ENCODE measurements at regions of chr1 and their contacts with region 1.

Region 1: DNA sequence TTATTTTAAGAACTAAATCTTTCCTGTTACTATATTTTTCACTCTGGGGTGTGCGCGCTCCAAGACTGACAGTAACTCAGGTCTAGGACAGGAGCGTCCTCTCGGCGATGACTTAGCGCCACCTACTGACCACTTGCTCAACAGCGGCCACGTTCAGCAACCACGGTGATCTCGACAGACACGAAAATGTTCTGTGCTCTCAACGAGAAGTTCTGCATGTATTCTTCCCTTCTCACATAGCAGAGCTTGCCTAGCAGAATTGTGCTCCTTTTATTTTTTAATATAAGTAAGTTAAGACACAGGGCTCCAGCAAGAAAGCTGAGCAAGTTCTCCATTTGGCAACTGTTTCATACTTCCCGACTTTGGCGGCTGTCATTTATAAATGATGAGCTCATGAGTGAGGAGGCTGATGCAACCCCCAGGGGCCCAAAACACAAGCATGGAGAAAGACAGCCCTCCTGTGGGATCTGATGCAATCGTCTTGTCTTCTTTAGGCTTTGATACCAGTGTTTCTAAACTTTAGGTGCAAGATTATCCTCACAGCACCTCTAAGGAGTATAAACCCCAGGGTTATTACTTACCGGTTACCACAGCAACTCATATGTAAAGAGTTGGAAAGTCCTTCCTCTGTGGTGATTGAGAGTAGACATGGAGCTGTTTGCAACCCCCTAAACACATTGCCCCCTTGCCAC is 92.6 kb downstream of the HHIPL2 start:
- DNase-seq: peak; percentile 58 to 88 (median 82)
- ATAC-seq: peak; percentile 97
- H3K4me3 ChIP-seq: no peak overlapping the region
- H3K4me3 Mint-ChIP-seq: peak overlapping the region in 9 of 10 donors; percentile 0 to 75 (median 58)
- H3K27ac ChIP-seq: no peak overlapping the region
- H3K27ac Mint-ChIP-seq: peak overlapping the region; percentile 26 to 84 (median 65)
- H3K4me1 ChIP-seq: peaks cover 8 to 9% of the 10 kb centered on the region in 2 donors
- H3K4me1 Mint-ChIP-seq: peaks cover 8 to 31% (median 15%) of the 10 kb centered on the region in 7 donors
- H3K27me3 ChIP-seq: no peaks in the 10 kb centered on the region
- H3K27me3 Mint-ChIP-seq: peaks cover 0 to 4% (median 0%) of the 10 kb centered on the region in 5 donors

Region 2: DNA sequence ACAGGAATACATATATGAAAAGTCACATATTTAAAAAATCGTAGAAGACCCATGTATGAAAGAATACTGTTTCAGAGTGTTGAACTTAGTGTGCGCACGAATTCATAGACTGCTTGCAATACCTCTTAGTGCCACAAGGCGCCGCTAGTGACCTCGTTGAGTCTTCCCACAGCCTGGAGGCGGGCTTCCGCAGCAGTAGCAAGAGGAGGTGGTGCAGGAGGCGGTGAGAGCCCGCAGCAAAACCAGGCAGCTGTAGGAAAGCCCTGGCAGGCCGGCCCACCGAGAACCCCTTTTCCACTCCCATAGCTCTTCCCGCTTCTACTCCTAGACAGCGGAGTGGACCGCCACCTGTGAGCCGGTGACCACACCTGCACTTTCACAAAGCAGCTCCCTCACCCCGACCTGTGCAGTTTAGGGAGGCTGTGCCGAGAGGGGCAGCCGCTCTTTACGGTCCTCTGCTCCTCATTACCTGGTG is 1645.1 kb before region 1 on chr1:
- CTCF ChIA-PET with region 1: no interaction called
- POLR2A ChIA-PET with region 1: no interaction called
- intact Hi-C with region 1: loop called in 1 of 2 experiments (anchors 1 kb)
- DNase-seq: peak; percentile 48 to 71 (median 59)
- ATAC-seq: peak; percentile 97
- H3K4me3 ChIP-seq: no peak overlapping the region
- H3K4me3 Mint-ChIP-seq: peak overlapping the region; percentile 33 to 86 (median 75)
- H3K27ac ChIP-seq: no peak overlapping the region
- H3K27ac Mint-ChIP-seq: peak overlapping the region in 1 of 9 donors; percentile 25
- H3K4me1 ChIP-seq: no peaks in the 10 kb centered on the region
- H3K4me1 Mint-ChIP-seq: peaks cover 0 to 9% (median 7%) of the 10 kb centered on the region in 7 donors
- H3K27me3 ChIP-seq: no peaks in the 10 kb centered on the region
- H3K27me3 Mint-ChIP-seq: peaks cover 5 to 33% (median 26%) of the 10 kb centered on the region in 5 donors

Region 3: DNA sequence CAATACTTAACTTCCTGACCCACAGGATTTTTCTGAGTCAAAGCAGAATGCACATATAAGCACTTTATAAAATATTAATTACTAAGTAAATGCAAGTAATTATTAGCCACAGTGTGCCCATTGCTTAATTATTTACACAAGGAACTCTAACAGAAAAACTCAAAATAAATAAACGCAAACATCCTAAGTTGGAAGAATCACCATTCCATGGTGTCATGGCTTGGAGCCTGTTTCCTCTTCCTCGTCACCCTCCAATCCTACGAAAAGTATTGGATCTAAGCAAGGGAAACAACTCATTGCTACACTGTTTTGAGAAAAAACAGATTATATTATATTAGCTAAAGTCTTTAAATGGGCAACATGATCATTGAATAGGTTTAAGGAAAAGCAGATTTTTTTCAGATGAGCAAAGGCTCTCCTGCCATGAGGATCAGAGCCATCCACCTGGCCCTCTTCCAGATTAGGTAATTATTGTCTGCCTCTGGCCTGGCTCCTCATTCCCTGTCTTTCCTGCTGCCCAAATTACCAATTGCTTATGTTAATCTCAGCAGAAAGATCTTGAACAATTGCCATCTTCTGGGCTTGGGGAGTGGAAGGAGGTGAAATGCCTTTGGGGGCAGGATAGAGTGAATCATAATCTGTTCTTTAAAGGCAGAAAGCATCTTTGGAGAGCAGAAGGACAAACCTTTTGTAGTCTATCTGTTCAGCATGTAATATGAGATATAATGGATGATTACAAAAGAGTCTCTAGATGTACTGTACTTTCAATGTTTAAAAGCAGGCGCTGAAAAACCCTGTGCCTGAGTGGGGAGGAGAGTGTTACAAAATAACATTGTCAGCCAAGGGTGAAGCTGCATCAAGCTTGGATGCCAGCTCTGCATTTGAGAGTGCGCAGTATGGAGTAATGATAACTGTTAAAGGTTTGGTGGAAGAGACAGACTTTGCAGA is 834.6 kb before region 1 on chr1:
- CTCF ChIA-PET with region 1: no interaction called
- POLR2A ChIA-PET with region 1: no interaction called
- intact Hi-C with region 1: loop called in 1 of 2 experiments (anchors 1 kb)
- DNase-seq: no peak
- ATAC-seq: no peak
- H3K4me3 ChIP-seq: no peak overlapping the region
- H3K4me3 Mint-ChIP-seq: no peak overlapping the region
- H3K27ac ChIP-seq: no peak overlapping the region
- H3K27ac Mint-ChIP-seq: no peak overlapping the region
- H3K4me1 ChIP-seq: no peaks in the 10 kb centered on the region
- H3K4me1 Mint-ChIP-seq: no peaks in the 10 kb centered on the region
- H3K27me3 ChIP-seq: no peaks in the 10 kb centered on the region
- H3K27me3 Mint-ChIP-seq: peaks cover 0 to 27% (median 0%) of the 10 kb centered on the region in 5 donors

Region 4: GRCh38 chr1:221979461-221980032 is 475.8 kb before region 1 on chr1:
- CTCF ChIA-PET with region 1: no interaction called
- POLR2A ChIA-PET with region 1: no interaction called
- intact Hi-C with region 1: loop called in 1 of 2 experiments (anchors 1 kb)
- DNase-seq: no peak
- ATAC-seq: no peak
- H3K4me3 ChIP-seq: no peak overlapping the region
- H3K4me3 Mint-ChIP-seq: no peak overlapping the region
- H3K27ac ChIP-seq: no peak overlapping the region
- H3K27ac Mint-ChIP-seq: no peak overlapping the region
- H3K4me1 ChIP-seq: no peaks in the 10 kb centered on the region
- H3K4me1 Mint-ChIP-seq: no peaks in the 10 kb centered on the region
- H3K27me3 ChIP-seq: no peaks in the 10 kb centered on the region
- H3K27me3 Mint-ChIP-seq: peaks cover 7 to 12% (median 9%) of the 10 kb centered on the region in 5 donors

Region 5: DNA sequence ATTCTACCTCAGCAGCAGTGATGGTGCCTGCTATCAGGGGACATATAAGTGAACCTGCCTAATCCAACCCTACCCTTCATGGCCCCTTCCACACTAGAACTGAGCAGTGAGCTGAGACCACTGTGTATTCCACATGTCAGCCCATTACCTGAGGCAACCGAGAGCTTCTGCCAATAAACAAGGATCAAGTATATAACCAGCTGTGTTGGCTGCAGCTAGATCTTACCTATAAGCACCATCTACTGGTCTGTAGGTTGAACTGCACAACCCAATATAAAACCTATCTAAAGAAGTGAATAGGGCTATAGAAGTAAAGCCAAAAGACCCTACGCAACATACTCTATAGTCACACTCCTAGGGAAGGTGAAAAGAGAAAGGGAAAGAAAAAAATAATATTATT is 284.3 kb before region 1 on chr1:
- CTCF ChIA-PET with region 1: no interaction called
- POLR2A ChIA-PET with region 1: no interaction called
- intact Hi-C with region 1: loop called in 1 of 2 experiments (anchors 5 kb)
- DNase-seq: no peak
- ATAC-seq: peak; percentile 46
- H3K4me3 ChIP-seq: no peak overlapping the region
- H3K4me3 Mint-ChIP-seq: no peak overlapping the region
- H3K27ac ChIP-seq: no peak overlapping the region
- H3K27ac Mint-ChIP-seq: no peak overlapping the region
- H3K4me1 ChIP-seq: no peaks in the 10 kb centered on the region
- H3K4me1 Mint-ChIP-seq: peaks cover 0 to 2% (median 0%) of the 10 kb centered on the region in 7 donors
- H3K27me3 ChIP-seq: no peaks in the 10 kb centered on the region
- H3K27me3 Mint-ChIP-seq: peaks cover 0 to 6% (median under 1%) of the 10 kb centered on the region in 5 donors

Region 6: DNA sequence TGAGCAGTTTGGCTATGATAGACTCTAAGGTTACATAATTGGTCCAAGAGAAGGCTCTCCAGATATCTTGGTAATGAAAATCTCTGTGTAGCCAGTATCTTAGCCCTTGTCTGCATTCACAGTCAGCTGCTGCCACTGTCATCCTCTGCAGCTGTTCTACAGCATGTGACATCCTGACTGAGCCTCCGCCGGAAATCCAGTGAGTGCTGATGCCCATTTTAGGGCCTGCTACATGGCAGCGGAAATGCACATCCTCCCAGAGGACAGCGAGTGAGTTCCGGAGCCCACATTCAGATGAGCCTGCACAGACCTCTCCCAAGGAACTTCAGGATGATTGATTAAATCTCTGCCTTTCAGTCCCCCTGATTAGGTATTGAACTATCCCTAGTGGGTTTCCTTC is 144.5 kb before region 1 on chr1:
- CTCF ChIA-PET with region 1: no interaction called
- POLR2A ChIA-PET with region 1: no interaction called
- intact Hi-C with region 1: no loop called
- DNase-seq: peak in 6 of 9 donors; percentile 4 to 23 (median 16)
- ATAC-seq: peak; percentile 27
- H3K4me3 ChIP-seq: no peak overlapping the region
- H3K4me3 Mint-ChIP-seq: no peak overlapping the region
- H3K27ac ChIP-seq: no peak overlapping the region
- H3K27ac Mint-ChIP-seq: no peak overlapping the region
- H3K4me1 ChIP-seq: no peaks in the 10 kb centered on the region
- H3K4me1 Mint-ChIP-seq: peaks cover 4 to 28% (median 15%) of the 10 kb centered on the region in 7 donors
- H3K27me3 ChIP-seq: no peaks in the 10 kb centered on the region
- H3K27me3 Mint-ChIP-seq: no peaks in the 10 kb centered on the region

Region 7: DNA sequence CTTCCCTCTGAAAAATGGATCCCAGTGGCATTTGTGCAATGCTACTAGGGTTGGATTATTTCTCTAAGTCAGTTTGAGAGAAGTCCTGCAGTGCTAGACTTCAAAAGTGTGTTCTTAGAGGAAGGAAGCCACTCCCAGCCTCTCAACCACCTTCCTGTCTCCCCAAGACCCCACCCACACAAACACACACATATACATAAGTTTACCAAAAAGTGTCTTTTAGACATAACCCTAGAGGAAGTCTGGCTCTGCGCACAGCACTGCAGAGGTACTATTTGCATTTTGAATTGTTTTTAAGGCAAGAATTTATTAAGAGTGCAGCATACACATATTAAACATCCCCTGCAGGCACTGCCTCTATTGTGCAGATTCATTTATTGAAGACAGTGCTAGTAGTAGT is 34.7 kb before region 1 on chr1:
- CTCF ChIA-PET with region 1: interaction called, 28 read pairs
- POLR2A ChIA-PET with region 1: interaction called, 20 read pairs
- intact Hi-C with region 1: loop called in 1 of 2 experiments (anchors 1 kb)
- DNase-seq: peak in 7 of 9 donors; percentile 62 to 84 (median 79)
- ATAC-seq: peak; percentile 93
- H3K4me3 ChIP-seq: peak overlapping the region; percentile 44
- H3K4me3 Mint-ChIP-seq: peak overlapping the region; percentile 50 to 83 (median 76)
- H3K27ac ChIP-seq: peak overlapping the region; percentile 50
- H3K27ac Mint-ChIP-seq: peak overlapping the region; percentile 85 to 99 (median 95)
- H3K4me1 ChIP-seq: peaks cover 36 to 62% of the 10 kb centered on the region in 2 donors
- H3K4me1 Mint-ChIP-seq: peaks cover 35 to 92% (median 80%) of the 10 kb centered on the region in 7 donors
- H3K27me3 ChIP-seq: no peaks in the 10 kb centered on the region
- H3K27me3 Mint-ChIP-seq: no peaks in the 10 kb centered on the region

Region 8: DNA sequence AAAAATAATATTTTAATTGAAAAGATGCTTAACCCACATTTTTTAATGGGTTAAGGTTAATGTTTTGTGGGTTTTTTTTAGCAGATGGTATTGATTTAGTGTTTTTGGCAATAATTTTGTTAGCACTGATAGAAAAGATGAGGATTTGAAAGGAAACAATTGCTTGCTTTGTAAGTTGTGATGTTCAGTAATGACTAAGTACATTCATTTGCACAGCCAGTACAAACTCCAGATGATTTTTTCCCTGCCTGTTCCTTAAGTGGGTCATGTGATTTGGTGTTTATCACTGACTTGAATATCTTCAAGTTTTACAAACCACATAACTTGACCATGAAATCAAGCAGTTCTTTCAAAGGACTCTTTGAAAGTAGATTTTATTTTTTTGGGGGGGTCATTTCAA is 374.5 kb after region 1 on chr1:
- CTCF ChIA-PET with region 1: no interaction called
- POLR2A ChIA-PET with region 1: no interaction called
- intact Hi-C with region 1: no loop called
- DNase-seq: no peak
- ATAC-seq: no peak
- H3K4me3 ChIP-seq: no peak overlapping the region
- H3K4me3 Mint-ChIP-seq: no peak overlapping the region
- H3K27ac ChIP-seq: no peak overlapping the region
- H3K27ac Mint-ChIP-seq: peak overlapping the region in 1 of 9 donors; percentile 67
- H3K4me1 ChIP-seq: no peaks in the 10 kb centered on the region
- H3K4me1 Mint-ChIP-seq: peaks cover 0 to 20% (median 3%) of the 10 kb centered on the region in 7 donors
- H3K27me3 ChIP-seq: no peaks in the 10 kb centered on the region
- H3K27me3 Mint-ChIP-seq: no peaks in the 10 kb centered on the region